Sigmoid colon (tissue), 7 donors: ENCODE measurements at regions of chr6 and their contacts with region 1.

Region 1: DNA sequence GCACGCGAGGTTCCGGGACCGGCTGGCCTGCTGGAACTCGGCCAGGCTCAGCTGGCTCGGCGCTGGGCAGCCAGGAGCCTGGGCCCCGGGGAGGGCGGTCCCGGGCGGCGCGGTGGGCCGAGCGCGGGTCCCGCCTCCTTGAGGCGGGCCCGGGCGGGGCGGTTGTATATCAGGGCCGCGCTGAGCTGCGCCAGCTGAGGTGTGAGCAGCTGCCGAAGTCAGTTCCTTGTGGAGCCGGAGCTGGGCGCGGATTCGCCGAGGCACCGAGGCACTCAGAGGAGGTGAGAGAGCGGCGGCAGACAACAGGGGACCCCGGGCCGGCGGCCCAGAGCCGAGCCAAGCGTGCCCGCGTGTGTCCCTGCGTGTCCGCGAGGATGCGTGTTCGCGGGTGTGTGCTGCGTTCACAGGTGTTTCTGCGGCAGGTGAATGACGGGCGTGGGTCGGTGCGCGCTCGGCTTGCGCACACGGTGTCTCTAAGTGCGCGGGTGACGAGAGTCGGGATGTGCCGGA is at the start of gene CDKN1A:
- DNase-seq: peak; percentile 97
- H3K4me3 ChIP-seq: peak within 1 kb of the TSS; percentile 64 to 97 (median 80)
- H3K27ac ChIP-seq: peak within 1 kb of the TSS; percentile 97 to 100 (median 100)
- H3K4me1 ChIP-seq: peaks cover 0 to 53% (median 38%) of the 10 kb centered on the region in 4 donors
- H3K27me3 ChIP-seq: no peaks in the 10 kb centered on the region
- CTCF ChIP-seq: peak in 1 of 4 experiments; percentile 14
- EP300 ChIP-seq: no peak
- POLR2A ChIP-seq: peak; percentile 95 to 96
- total RNA-seq, gene CDKN1A: 35.7 to 390 (median 49.7) TPM

Region 2: DNA sequence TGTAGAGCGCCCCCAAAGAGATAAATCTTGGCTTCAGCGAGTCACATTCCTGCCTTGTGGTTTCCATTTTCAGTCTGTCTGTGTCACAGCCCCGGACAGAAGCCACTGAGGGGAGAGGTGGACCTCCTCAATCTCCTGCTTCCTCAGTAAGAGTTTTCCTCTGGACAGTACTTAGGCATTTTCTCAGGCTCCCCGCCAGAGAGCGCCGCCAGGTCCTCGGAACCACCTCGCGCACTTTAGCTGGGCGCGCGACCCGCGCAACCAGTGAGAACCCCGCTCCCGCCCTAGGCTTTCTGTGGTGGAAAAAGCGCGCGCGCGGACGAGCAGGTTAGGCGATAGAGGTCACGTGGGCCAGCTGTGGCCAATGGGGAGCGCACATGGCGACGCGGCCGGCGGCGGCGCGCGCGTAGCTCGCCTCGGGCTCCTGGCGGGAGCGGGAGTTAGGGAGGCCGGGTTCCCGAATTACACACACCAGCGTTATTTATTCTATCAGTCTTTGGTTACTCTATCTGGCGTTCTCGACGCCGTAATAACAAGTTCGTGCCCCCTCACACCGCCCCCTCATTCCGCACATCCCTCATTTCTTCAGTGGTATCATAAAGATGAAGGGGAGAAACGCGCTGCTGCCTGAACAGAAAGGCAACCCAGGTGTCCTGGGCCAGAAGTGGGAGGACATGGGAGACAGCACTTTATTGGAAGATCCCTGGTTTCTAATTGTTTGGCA is 255.3 kb before region 1 on chr6:
- intact Hi-C with region 1: loop called (anchors 2 kb)
- DNase-seq: peak; percentile 99
- H3K4me3 ChIP-seq: peak overlapping the region; percentile 36 to 61 (median 50)
- H3K27ac ChIP-seq: peak overlapping the region; percentile 86 to 90 (median 89)
- H3K4me1 ChIP-seq: peaks cover 0 to 8% (median 7%) of the 10 kb centered on the region in 4 donors
- H3K27me3 ChIP-seq: no peaks in the 10 kb centered on the region
- CTCF ChIP-seq: peak; percentile 29 to 57 (median 51)
- EP300 ChIP-seq: no peak
- POLR2A ChIP-seq: peak; percentile 70 to 80

Region 3: DNA sequence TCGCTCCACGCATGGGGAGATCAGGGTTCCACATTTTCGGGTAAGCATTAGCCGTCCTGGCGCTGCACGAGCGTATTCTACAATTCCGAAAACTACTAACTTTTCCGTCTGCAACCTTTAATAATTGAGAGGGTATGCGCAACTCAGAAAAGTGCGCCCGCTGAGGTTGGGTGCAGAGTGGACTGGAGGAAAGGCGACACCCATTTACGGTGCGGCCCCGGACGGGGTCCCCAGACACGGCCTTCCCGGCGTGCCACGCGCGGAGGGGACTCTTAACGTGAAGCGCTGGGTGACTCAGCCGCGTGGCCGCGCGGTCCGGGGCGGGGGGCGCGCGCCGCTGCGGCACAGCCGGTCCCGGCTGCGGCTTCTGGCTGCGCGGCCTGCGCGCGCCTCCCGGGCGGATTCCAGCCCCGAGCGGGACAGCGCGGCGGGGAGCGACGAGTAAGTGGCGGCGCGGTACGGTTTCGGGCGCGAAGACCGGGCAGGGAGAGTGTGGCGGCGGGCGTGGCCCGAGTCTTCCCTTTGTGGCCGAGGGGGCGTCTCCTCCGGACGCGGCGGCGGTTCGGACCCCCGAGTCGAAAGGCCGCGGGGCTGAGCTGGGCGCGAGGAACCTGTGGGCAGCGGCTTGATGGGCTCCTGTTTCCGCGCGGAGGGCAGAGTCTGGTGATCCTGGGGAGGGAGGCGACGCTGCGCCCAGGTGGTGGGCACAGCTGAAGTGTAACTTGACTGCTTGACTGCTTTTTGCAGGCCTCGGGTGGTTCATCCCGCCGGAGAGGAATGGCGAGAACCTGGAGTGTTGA is 235.7 kb before region 1 on chr6 and contains the starts of genes KCTD20 and PXT1:
- intact Hi-C with region 1: loop called (anchors 2 kb)
- DNase-seq: peak; percentile 95
- H3K4me3 ChIP-seq: peak within 1 kb of the TSS; percentile 87 to 99 (median 94)
- H3K27ac ChIP-seq: peak within 1 kb of the TSS; percentile 97 to 99 (median 98)
- H3K4me1 ChIP-seq: peaks cover 2 to 41% (median 37%) of the 10 kb centered on the region in 4 donors
- H3K27me3 ChIP-seq: no peaks in the 10 kb centered on the region
- CTCF ChIP-seq: no peak
- EP300 ChIP-seq: peak in 2 of 4 donors; percentile 19 to 69
- POLR2A ChIP-seq: peak; percentile 32 to 69
- total RNA-seq, gene KCTD20: 48.5 to 71.3 (median 50.8) TPM
- total RNA-seq, gene PXT1: not detected

Region 4: DNA sequence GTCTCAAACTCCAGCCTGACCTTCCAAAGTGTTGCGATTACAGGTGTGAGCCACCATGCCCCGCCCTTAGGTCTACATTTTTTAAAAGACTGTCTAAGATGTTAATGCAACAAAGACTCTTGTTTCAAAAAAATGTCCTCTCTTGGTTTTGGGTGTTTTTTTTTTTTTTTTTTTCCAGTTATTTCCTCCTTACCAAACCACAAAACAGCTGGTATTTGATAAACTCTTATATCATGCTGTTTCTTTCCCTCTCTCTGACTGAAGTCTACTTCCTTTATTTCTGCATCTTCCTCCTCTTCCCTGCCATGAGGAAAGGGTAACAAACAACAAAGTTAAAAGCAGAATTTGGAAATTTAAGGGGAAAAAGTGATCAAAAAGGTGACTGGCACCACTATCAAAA is 152.5 kb before region 1 on chr6:
- intact Hi-C with region 1: no loop called
- DNase-seq: no peak
- H3K4me3 ChIP-seq: no peak overlapping the region
- H3K27ac ChIP-seq: no peak overlapping the region
- H3K4me1 ChIP-seq: peaks cover 0 to 7% (median 0%) of the 10 kb centered on the region in 4 donors
- H3K27me3 ChIP-seq: no peaks in the 10 kb centered on the region
- CTCF ChIP-seq: no peak
- EP300 ChIP-seq: no peak
- POLR2A ChIP-seq: no peak

Region 5: DNA sequence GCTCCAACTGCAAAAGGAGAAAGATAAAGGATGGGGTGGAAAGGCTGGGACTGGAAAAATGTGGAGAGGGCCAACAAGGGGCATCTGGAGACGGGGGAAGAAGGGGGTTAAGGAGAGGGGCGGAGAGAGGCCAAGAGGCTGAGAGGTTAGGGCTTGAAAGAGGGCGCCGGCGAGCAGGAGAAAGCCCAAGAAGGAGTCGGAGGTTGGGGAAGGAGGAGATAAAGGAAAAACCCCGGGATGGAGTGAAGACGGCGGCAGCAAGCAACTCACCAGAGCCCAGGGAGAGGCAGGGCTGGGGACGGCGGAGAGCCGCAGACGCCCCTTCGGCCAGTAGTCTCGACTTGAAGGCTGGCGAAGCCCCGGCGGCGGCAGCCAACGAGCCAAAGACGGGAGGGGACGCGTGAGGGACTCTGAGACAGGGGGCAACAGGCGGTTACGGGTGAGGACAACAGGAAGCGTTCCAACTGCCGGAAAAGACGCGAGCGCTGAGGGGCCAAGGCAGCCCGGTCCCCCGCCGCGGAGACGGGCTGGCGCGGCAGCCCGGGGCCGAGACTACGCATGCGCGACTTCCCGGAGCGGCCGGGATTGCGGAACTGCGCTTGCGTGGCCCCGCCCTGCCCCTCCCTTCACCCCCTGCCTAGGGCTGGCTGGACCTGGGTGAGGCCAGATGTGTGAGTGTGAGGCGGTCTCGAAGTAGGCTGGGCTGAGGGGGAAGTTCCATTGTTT is 131.5 kb before region 1 on chr6 and contains the start of gene STK38:
- intact Hi-C with region 1: loop called (anchors 2 kb)
- DNase-seq: peak; percentile 96
- H3K4me3 ChIP-seq: peak within 1 kb of the TSS; percentile 90 to 99 (median 97)
- H3K27ac ChIP-seq: peak within 1 kb of the TSS; percentile 95 to 100 (median 99)
- H3K4me1 ChIP-seq: peaks cover 0 to 49% (median 41%) of the 10 kb centered on the region in 4 donors
- H3K27me3 ChIP-seq: no peaks in the 10 kb centered on the region
- CTCF ChIP-seq: no peak
- EP300 ChIP-seq: no peak
- POLR2A ChIP-seq: peak; percentile 97 to 98
- total RNA-seq, gene STK38: 25.8 to 46.3 (median 33.1) TPM

Region 6: DNA sequence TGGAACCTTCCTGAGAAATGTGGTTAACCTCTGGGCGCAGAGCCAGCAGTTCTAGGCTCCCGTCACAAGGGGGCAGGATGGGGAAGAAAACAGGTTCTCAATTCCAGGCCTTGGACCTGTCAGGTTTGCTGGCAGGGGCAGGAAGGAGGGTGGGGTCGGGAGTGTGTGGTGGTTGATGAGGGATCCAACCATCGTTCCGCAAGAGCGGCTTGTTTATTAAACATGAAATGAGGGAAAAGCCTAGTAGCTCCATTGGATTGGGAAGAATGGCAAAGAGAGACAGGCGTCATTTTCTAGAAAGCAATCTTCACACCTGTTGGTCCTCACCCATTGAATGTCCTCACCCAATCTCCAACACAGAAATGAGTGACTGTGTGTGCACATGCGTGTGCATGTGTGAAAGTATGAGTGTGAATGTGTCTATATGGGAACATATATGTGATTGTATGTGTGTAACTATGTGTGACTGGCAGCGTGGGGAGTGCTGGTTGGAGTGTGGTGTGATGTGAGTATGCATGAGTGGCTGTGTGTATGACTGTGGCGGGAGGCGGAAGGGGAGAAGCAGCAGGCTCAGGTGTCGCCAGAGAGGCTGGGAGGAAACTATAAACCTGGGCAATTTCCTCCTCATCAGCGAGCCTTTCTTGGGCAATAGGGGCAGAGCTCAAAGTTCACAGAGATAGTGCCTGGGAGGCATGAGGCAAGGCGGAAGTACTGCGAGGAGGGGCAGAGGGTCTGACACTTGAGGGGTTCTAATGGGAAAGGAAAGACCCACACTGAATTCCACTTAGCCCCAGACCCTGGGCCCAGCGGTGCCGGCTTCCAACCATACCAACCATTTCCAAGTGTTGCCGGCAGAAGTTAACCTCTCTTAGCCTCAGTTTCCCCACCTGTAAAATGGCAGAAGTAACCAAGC is 54.8 kb before region 1 on chr6:
- intact Hi-C with region 1: loop called (anchors 1 kb)
- DNase-seq: peak; percentile 95
- H3K4me3 ChIP-seq: no peak overlapping the region
- H3K27ac ChIP-seq: peak overlapping the region in 1 of 4 donors; percentile 49
- H3K4me1 ChIP-seq: peaks cover 0 to 35% (median 28%) of the 10 kb centered on the region in 4 donors
- H3K27me3 ChIP-seq: no peaks in the 10 kb centered on the region
- CTCF ChIP-seq: peak; percentile 84 to 96 (median 90)
- EP300 ChIP-seq: no peak
- POLR2A ChIP-seq: peak in 1 of 2 donors; percentile 29

Region 7: DNA sequence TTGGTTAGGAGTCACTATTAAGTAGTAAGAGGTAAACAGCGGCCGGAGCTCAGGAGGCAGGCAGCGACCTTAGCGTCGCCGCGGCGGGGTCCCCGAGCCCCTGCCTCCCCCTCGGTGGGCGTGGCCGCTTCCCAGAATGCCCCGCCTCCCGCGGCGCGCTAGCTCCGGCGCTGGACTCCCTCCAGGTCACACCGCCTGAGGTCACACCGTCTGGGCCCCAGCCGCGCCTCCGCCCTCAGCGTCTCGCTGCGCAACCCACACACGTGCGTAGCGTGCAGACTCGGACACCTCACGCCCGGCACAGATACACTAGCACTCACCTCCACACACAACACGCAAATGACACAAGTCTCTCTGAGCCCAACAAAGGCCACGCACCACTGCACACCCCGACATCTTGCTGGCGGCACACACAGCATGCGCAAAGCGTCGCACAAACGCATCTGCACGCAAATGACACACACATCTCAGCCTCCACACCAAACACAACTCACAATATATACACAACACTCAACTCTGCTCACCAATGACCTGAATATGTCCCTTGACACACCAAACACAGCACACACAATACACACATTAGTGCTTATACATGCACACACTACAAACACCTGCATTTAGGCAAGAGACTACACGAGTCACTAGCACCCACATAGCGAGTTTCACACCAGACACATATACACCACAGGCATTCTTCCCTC is 17.7 kb before region 1 on chr6:
- intact Hi-C with region 1: loop called (anchors 2 kb)
- DNase-seq: peak; percentile 84
- H3K4me3 ChIP-seq: peak overlapping the region in 2 of 4 donors; percentile 8 to 12
- H3K27ac ChIP-seq: peak overlapping the region in 3 of 4 donors; percentile 56 to 72 (median 58)
- H3K4me1 ChIP-seq: peaks cover 0 to 48% (median 39%) of the 10 kb centered on the region in 4 donors
- H3K27me3 ChIP-seq: no peaks in the 10 kb centered on the region
- CTCF ChIP-seq: no peak
- EP300 ChIP-seq: no peak
- POLR2A ChIP-seq: no peak

Region 8: GRCh38 chr6:36759148-36759759 is 80.7 kb after region 1 on chr6:
- intact Hi-C with region 1: loop called (anchors 5 kb)
- DNase-seq: peak; percentile 92
- H3K4me3 ChIP-seq: no peak overlapping the region
- H3K27ac ChIP-seq: no peak overlapping the region
- H3K4me1 ChIP-seq: peaks cover 0 to 8% (median 6%) of the 10 kb centered on the region in 4 donors
- H3K27me3 ChIP-seq: no peaks in the 10 kb centered on the region
- CTCF ChIP-seq: peak; percentile 88 to 98 (median 94)
- EP300 ChIP-seq: no peak
- POLR2A ChIP-seq: no peak